Heart left ventricle (tissue), 16 donors: ENCODE measurements at regions of chr7 and their contacts with region 1.

Region 1: DNA sequence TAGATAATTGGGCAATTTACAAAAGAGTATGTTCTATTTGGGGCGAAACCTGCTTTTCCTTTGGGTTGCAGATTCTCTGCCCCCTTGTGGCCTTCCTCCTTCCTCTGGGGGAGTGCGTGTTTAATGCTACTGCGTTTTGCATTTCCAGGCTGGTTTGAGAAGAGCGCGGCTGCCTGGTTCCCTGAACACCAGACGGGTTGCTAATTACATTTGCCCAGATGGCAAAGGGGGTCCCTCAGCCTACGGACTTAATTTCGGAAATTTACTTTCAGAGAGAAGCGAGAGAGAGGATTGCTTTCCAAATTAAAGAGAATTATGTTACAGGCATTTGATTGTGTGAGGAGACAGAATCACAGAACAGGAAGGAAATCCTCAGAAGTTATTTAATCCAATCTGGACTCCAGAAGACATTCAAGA is 91.9 kb upstream of the JAZF1 start:
- DNase-seq: peak in 4 of 5 donors; percentile 33 to 44 (median 41)
- ATAC-seq: peak in 3 of 4 donors; percentile 59 to 83 (median 80)
- H3K4me3 ChIP-seq: peak overlapping the region in 8 of 12 donors; percentile 17 to 35 (median 28)
- H3K27ac ChIP-seq: no peak overlapping the region
- H3K4me1 ChIP-seq: peaks cover 0 to 5% (median 0%) of the 10 kb centered on the region in 12 donors
- H3K27me3 ChIP-seq: no peaks in the 10 kb centered on the region
- CTCF ChIP-seq: peak; percentile 46 to 75 (median 60)
- POLR2A ChIP-seq: no peak

Region 2: DNA sequence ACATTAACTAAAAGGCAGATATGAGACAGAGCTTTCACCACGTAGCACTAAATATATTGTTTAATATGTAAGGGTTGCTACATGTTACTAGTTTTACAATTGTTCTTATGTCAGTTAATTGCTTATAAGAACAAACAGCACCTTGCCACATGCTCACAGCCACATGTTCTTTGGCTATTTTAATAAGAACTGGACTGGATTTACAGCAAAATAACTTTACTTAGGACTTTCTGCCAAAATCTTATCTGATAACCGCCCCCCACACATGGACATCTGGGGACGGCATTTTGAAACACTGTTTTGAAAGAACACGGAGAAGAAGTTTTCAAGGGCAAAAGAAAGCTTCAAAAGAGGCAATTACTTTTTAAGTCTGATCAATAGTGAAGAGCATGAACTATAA is 137.2 kb before region 1 on chr7:
- intact Hi-C with region 1: loop called in 1 of 10 experiments (anchors 5 kb)
- DNase-seq: no peak
- ATAC-seq: no peak
- H3K4me3 ChIP-seq: no peak overlapping the region
- H3K27ac ChIP-seq: peak overlapping the region in 1 of 12 donors; percentile 70
- H3K4me1 ChIP-seq: peaks cover 0 to 54% (median 17%) of the 10 kb centered on the region in 12 donors
- H3K27me3 ChIP-seq: no peaks in the 10 kb centered on the region
- CTCF ChIP-seq: no peak
- POLR2A ChIP-seq: no peak

Region 3: GRCh38 chr7:28203508-28204240 is 68.8 kb before region 1 on chr7:
- intact Hi-C with region 1: loop called in 1 of 10 experiments (anchors 5 kb)
- DNase-seq: no peak
- ATAC-seq: no peak
- H3K4me3 ChIP-seq: no peak overlapping the region
- H3K27ac ChIP-seq: no peak overlapping the region
- H3K4me1 ChIP-seq: peaks cover 0 to 11% (median 0%) of the 10 kb centered on the region in 12 donors
- H3K27me3 ChIP-seq: no peaks in the 10 kb centered on the region
- CTCF ChIP-seq: no peak
- POLR2A ChIP-seq: no peak